ENCODE measurements at regions of chr3 and their contacts with region 1.

Region 1: DNA sequence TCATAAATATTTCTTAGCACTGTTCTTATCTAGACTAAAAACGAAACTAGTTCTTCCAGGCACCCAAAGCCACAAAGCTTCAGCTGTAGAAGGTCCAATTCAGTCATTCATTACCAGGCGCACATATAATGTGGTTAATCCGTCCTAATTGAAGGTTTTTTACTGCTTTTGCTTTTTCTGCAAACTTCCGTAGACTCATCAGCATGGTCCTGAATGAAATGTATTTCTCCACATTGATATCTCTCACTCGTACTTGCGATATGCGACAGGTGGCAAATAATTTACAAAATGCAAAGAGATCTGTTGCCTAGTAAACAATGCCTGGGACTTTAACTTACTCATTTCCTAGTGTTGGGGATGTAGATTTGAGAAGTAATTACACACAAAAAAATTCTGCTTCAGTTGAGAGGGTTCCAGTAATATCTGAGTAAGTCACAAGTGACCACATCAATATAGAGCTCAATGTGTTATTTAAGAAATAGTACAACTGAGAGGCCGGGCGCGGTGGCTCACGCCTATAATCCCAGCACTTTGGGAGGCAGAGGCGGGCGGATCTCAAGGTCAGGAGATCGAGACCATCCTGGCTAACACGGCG is 75.0 kb upstream of the MBNL1 start:
- DNase-seq: peak; percentile 82
- H3K4me3 Mint-ChIP-seq: peak overlapping the region; percentile 87
- H3K27ac Mint-ChIP-seq: peak overlapping the region; percentile 96
- H3K4me1 Mint-ChIP-seq: peaks cover 68% of the 10 kb centered on the region
- H3K27me3 Mint-ChIP-seq: no peaks in the 10 kb centered on the region

Region 2: DNA sequence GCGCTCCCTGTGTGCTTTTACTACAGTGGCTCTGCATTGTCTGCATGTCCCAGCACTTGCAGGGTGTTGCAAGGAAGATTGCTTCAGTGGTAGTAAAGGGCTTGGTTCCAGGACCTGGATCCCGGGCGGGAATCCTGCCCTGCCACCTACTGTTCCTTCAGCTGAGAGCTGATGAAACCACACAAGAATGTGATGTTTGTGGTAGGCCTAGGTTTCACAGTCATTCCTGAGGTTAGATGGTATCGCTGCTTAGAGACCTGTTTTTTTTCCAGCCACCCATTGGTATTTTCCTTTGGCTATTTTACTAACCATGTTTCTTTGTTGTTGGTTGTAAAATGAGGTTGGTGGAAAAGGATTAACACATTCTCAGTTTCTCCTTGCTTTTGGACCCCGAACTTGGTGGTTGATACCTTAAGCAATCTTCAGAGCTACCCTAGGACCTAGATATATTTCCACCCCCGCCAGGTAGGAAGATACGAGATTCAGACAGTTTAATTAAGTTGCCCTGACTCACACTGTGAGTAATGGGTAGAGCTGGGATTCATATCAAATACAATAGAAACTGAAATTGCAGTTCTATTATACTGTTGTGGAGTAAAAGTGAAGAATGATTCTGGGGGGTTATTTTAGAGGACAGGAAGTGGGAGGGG is 888.5 kb before region 1 on chr3:
- intact Hi-C with region 1: loop called (anchors 5 kb)
- DNase-seq: peak; percentile 65
- H3K4me3 Mint-ChIP-seq: peak overlapping the region; percentile 13
- H3K27ac Mint-ChIP-seq: peak overlapping the region; percentile 80
- H3K4me1 Mint-ChIP-seq: peaks cover 50% of the 10 kb centered on the region
- H3K27me3 Mint-ChIP-seq: peaks cover 2% of the 10 kb centered on the region

Region 3: GRCh38 chr3:152127058-152127457 is 66.7 kb before region 1 on chr3:
- intact Hi-C with region 1: loop called (anchors 2 kb)
- DNase-seq: peak; percentile 59
- H3K4me3 Mint-ChIP-seq: no peak overlapping the region
- H3K27ac Mint-ChIP-seq: no peak overlapping the region
- H3K4me1 Mint-ChIP-seq: peaks cover 10% of the 10 kb centered on the region
- H3K27me3 Mint-ChIP-seq: peaks cover 15% of the 10 kb centered on the region

Region 4: GRCh38 chr3:152159328-152159727 is 34.4 kb before region 1 on chr3:
- intact Hi-C with region 1: no loop called
- DNase-seq: no peak
- H3K4me3 Mint-ChIP-seq: no peak overlapping the region
- H3K27ac Mint-ChIP-seq: no peak overlapping the region
- H3K4me1 Mint-ChIP-seq: no peaks in the 10 kb centered on the region
- H3K27me3 Mint-ChIP-seq: peaks cover 19% of the 10 kb centered on the region

Region 5: DNA sequence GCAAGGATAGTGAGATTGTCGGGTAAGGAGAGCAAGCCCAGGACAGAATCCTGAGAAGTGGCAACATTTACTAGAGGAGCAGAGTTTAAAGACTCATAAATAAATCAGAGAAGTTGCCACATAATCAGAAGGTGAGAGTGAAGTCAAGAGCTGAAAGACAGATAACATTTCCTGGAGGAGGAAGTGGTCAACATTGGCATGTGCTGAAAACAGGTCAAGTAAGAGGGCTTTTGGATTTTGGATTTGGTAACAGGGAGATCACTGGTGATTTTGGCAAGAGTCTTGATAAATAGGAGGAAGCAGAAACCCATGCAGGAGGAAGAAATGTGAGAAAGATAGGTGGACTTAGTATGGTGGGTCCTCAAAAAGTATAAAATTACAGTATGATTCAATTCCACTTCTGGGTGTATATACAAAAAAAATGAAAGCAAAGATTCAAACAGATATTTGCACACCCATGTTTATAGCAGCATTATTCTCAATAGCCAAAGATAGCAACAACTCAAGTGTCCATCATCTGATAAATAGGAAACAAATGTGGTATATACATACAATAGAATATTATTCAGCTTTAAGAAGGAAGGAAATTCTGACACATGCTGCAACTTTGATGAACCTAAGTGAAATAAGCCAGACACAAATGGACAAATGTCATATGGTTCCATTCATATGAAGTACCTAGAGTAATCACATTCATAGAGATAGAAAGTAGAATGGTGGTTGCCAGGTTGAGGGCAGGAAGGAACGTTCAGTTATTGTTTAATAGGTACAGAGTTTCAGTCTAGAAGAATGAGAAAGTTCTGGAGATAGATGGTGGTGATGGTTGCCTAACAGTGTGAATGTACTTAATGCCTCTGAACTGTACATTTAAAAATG is 47.6 kb after region 1 on chr3:
- intact Hi-C with region 1: loop called (anchors 1 kb)
- DNase-seq: peak; percentile 71
- H3K4me3 Mint-ChIP-seq: peak overlapping the region; percentile 62
- H3K27ac Mint-ChIP-seq: peak overlapping the region; percentile 89
- H3K4me1 Mint-ChIP-seq: peaks cover 48% of the 10 kb centered on the region
- H3K27me3 Mint-ChIP-seq: no peaks in the 10 kb centered on the region

Region 6: GRCh38 chr3:152444029-152444641 is 250.4 kb after region 1 on chr3:
- intact Hi-C with region 1: loop called (anchors 5 kb)
- DNase-seq: no peak
- H3K4me3 Mint-ChIP-seq: no peak overlapping the region
- H3K27ac Mint-ChIP-seq: peak overlapping the region; percentile 5
- H3K4me1 Mint-ChIP-seq: peaks cover 41% of the 10 kb centered on the region
- H3K27me3 Mint-ChIP-seq: no peaks in the 10 kb centered on the region